MCF 10A (cell line): ENCODE measurements at regions of chr4 and their contacts with region 1.

Region 1: DNA sequence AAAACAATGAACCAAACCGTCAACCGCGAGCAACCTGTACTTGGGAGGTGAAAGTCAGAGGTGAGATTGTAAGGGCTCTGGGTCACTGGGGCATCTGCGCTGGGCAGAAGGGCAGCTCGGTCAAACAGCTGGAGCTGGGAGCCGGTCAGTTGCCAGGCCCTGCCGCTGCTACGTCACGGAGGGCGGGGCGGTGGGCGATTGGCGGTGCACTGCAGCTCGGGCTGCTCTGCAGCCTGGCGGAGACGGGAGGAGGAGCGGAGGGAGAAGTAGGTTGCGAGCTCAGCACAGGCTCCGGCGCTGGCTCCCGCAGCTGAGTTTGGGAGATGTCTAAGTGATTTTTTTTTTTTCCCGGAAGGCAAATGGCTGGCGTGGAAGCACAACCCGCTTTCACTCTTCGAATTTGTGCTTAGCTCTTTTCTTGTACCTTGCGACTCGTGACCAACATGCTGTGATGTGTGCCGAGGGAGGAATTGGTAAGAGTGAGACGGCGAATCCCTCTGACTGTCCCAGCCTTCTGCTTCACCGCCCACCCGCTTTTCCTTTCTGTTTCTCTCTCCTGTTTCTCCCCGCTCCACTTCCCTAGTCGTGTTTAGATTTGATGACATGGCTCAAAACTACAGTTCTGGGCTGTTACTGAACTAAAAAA is at the start of gene ATP10D:
- DNase-seq: peak; percentile 90
- H3K4me3 Mint-ChIP-seq: peak within 1 kb of the TSS; percentile 94
- H3K27ac Mint-ChIP-seq: peak within 1 kb of the TSS; percentile 99
- H3K4me1 Mint-ChIP-seq: peaks cover 6% of the 10 kb centered on the region
- H3K27me3 Mint-ChIP-seq: no peaks in the 10 kb centered on the region
- CTCF ChIP-seq: no peak
- total RNA-seq, gene ATP10D: 16.2 and 16.9 TPM in 2 replicates

Region 2: GRCh38 chr4:47463235-47463956 is 21.8 kb before region 1 on chr4 and contains the start of gene COMMD8:
- CTCF ChIA-PET with region 1: interaction called, 16 read pairs
- POLR2A ChIA-PET with region 1: interaction called, 50 read pairs
- intact Hi-C with region 1: loop called (anchors 1 kb)
- DNase-seq: peak; percentile 95
- H3K4me3 Mint-ChIP-seq: peak within 1 kb of the TSS; percentile 83
- H3K27ac Mint-ChIP-seq: peak within 1 kb of the TSS; percentile 54
- H3K4me1 Mint-ChIP-seq: peaks cover 18% of the 10 kb centered on the region
- H3K27me3 Mint-ChIP-seq: no peaks in the 10 kb centered on the region
- CTCF ChIP-seq: no peak
- total RNA-seq, gene COMMD8: 21.1 and 21.3 TPM in 2 replicates

Region 3: DNA sequence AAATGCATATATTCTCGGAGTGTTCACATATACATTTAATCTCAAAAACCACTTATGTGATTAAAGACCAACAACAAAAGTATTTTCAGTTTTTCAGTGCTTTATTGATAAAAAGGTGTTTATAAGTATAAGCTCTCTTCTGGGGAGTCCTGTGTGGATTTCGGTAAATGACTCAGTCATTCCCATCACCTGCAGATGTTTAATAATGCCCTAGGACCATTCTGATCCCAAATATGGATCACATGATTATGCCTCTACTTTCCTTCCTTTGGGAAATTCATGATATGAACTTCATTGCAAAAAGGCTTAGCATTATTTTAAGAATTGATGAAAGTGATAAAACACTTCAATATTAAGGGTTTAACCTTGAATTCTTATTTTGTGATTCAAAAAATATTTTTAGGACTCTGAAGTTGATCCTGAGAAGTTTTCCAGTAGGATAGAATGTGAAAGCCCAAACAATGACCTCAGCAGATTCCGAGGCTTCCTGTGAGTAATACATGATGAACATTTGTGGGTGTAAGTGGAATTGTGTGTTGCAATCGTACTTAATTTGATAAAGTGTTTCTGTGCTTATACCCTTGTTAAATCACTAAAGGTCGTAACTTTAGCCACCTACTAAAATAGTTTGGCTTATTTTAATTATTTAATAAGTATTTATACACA is 40.1 kb after region 1 on chr4:
- CTCF ChIA-PET with region 1: no interaction called
- POLR2A ChIA-PET with region 1: interaction called, 12 read pairs
- intact Hi-C with region 1: no loop called
- DNase-seq: peak; percentile 86
- H3K4me3 Mint-ChIP-seq: peak overlapping the region; percentile 12
- H3K27ac Mint-ChIP-seq: peak overlapping the region; percentile 85
- H3K4me1 Mint-ChIP-seq: peaks cover 17% of the 10 kb centered on the region
- H3K27me3 Mint-ChIP-seq: no peaks in the 10 kb centered on the region
- CTCF ChIP-seq: no peak

Region 4: DNA sequence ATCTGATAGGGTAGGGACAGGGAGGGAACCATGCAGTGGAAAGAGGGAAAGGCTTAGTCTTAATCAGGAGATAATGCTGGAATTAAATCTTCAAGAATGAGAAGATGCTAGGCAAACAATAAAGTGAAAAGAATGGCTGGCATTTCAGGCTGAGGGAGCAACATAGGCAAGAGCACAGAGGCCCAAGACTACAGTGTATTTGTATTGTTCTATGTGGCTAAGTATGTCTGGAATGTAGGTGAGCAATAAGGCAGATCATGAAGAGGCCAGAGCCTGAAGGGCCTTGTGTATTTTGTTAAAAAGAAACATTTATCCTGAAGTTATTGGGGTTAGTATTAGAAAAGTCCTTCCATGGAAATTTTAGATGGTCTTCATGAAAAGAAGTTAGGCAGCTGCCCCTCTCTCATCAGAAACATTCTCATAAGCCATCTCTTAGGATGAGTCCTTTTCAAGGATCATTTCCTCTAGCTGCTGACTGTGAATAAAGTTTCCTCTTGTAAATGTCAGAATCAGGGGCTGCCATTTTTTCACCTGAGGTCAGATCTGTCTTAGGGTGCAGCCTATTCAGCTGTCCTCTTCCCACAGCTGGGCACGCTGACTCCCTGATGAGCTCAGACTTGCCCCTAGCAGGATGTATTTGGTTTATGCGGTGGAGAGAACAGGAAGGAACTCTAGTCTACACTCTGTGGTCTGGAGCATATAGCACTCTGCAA is 46.2 kb after region 1 on chr4:
- CTCF ChIA-PET with region 1: interaction called, 3 read pairs
- POLR2A ChIA-PET with region 1: interaction called, 12 read pairs
- intact Hi-C with region 1: no loop called
- DNase-seq: peak; percentile 72
- H3K4me3 Mint-ChIP-seq: no peak overlapping the region
- H3K27ac Mint-ChIP-seq: peak overlapping the region; percentile 83
- H3K4me1 Mint-ChIP-seq: peaks cover 26% of the 10 kb centered on the region
- H3K27me3 Mint-ChIP-seq: no peaks in the 10 kb centered on the region
- CTCF ChIP-seq: no peak

Region 5: DNA sequence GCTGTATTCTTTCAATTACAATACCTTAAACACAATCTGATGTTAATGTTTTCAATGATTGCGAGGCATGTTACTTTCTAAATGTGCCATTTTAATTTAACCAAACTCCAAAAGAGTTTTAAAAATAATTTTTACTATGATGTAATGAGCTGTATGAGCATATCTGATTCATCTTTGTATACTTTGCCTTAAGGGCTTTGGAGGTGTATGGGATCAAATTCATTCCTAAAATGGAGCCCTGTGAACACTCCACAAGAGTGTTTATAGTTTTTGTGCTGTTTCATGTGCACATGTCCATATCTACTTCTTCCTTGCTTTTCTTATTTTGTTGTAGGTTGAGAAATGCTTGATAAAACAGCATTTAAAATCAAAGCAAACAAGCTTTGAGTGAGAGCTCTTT is 82.3 kb after region 1 on chr4:
- CTCF ChIA-PET with region 1: interaction called, 10 read pairs
- POLR2A ChIA-PET with region 1: interaction called, 13 read pairs
- intact Hi-C with region 1: loop called (anchors 5 kb)
- DNase-seq: peak; percentile 19
- H3K4me3 Mint-ChIP-seq: no peak overlapping the region
- H3K27ac Mint-ChIP-seq: peak overlapping the region; percentile 12
- H3K4me1 Mint-ChIP-seq: no peaks in the 10 kb centered on the region
- H3K27me3 Mint-ChIP-seq: no peaks in the 10 kb centered on the region
- CTCF ChIP-seq: no peak